ENCODE measurements at regions of chr17 and their contacts with region 1.

Region 1: DNA sequence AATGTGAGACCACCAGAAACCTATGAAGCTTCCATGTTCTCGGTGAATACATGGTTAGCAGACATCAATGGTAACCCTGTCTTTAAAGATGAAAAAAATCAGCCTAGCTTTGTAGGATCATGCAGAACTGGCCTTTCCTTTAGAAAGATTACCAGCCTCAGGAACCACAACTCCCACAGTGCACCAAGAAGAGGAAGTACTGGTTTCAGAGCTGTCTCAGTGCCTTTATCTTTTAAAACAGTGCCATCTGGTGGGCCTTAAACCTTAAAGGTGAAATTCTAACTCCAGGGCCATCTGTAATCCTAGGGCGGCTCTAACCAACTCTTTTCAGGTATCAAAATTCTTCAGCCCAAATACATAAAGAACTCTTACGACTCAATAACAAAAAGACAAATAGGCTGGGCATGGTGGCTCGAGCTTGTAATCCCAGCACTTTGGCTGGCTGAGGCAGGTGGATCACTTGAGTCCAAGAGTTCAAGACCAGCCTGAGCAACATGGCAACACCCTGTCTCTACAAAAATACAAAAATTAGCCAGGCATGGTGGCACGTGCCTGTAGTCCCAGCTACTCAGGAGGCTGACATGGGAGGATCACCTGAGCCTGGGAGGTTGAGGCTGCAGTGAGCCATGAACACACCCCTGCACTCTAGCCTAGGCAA is 5.4 kb downstream of the ATPAF2 start:
- DNase-seq: peak; percentile 83
- ATAC-seq: peak; percentile 93
- H3K4me3 ChIP-seq: no peak overlapping the region
- H3K27ac ChIP-seq: no peak overlapping the region
- H3K4me1 ChIP-seq: peaks cover 34% of the 10 kb centered on the region
- H3K27me3 ChIP-seq: no peaks in the 10 kb centered on the region; a peak in 1 of 5 replicates
- CTCF ChIP-seq: peak; percentile 90
- EP300 ChIP-seq: no peak
- POLR2A ChIP-seq: no peak
- RAD21 ChIP-seq: peak; percentile 71

Region 2: DNA sequence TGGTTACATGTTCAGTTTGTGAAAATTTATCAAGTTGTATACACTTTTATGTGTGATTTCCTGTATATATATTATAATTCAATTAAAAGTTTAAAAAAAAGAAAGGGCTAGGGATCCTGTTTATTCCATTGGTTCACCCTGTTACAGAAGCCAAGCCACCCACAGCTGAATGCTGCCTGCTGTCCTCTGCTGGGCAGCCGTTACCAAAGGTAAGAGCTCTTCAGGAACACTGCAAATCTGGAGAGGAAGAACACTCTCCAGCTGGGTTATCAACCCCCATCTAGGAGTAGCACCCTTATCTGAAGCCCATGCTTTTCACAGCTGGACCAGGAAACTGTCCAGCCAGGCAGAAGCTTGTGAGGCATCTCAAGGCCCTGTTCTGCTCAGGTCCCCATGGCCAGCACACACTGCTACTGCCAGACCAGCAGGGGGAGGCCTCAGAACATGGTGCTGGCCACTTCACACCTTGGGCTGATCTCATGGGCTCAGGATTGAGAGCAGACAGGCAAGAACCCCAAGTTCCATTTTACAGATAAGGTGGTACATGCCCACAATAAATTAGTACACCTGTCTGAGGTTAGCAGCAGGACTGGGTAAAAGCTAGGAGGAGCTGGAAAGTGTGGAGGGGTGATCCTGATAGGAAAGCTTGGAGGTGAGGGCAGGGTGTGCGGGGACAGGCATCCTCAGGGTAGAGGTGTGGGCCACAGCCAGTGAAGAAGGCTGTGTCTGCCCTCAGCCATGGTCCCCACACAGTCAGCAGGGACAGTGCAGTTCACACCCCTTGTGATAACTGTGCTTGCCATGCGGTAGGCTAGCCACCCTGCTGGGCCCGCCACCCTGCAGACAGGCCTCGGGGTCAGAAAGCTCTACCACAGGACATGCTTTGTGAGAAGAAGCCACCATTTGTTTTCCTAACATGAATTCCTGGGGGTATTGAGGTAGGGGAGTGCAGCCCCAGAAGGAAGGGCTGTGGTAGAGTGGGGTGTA is 142.5 kb before region 1 on chr17:
- CTCF ChIA-PET with region 1: interaction called, 13 read pairs
- POLR2A ChIA-PET with region 1: no interaction called
- in situ Hi-C with region 1: loop called (anchors 10 kb)
- intact Hi-C with region 1: loop called (anchors 5 kb)
- DNase-seq: peak; percentile 70
- ATAC-seq: peak; percentile 98
- H3K4me3 ChIP-seq: no peak overlapping the region
- H3K27ac ChIP-seq: no peak overlapping the region
- H3K4me1 ChIP-seq: peaks cover 2% of the 10 kb centered on the region
- H3K27me3 ChIP-seq: no peaks in the 10 kb centered on the region
- CTCF ChIP-seq: peak; percentile 97
- EP300 ChIP-seq: no peak
- POLR2A ChIP-seq: no peak
- RAD21 ChIP-seq: peak; percentile 94

Region 3: GRCh38 chr17:17994271-17995069 is 39.1 kb before region 1 on chr17:
- CTCF ChIA-PET with region 1: interaction called, 14 read pairs
- POLR2A ChIA-PET with region 1: no interaction called
- in situ Hi-C with region 1: loop called (anchors 5 kb)
- intact Hi-C with region 1: loop called (anchors 1 kb)
- DNase-seq: peak; percentile 56
- ATAC-seq: peak; percentile 89
- H3K4me3 ChIP-seq: peak overlapping the region in 1 of 3 experiments; percentile 18; a peak in 1 of 6 replicates
- H3K27ac ChIP-seq: no peak overlapping the region
- H3K4me1 ChIP-seq: peaks cover 29% of the 10 kb centered on the region
- H3K27me3 ChIP-seq: peaks cover 0 to 22% of the 10 kb centered on the region in 2 experiments; a peak in 3 of 5 replicates
- CTCF ChIP-seq: peak; percentile 81
- EP300 ChIP-seq: no peak
- POLR2A ChIP-seq: no peak
- RAD21 ChIP-seq: peak; percentile 66

Region 4: GRCh38 chr17:18076936-18077335 is 43.4 kb after region 1 on chr17:
- CTCF ChIA-PET with region 1: no interaction called
- POLR2A ChIA-PET with region 1: no interaction called
- in situ Hi-C with region 1: no loop called
- intact Hi-C with region 1: no loop called
- DNase-seq: no peak
- ATAC-seq: 0 out of 3 replicates have a peak, but pooled peaks have one; percentile 32
- H3K4me3 ChIP-seq: no peak overlapping the region
- H3K27ac ChIP-seq: no peak overlapping the region
- H3K4me1 ChIP-seq: peaks cover 38% of the 10 kb centered on the region
- H3K27me3 ChIP-seq: no peaks in the 10 kb centered on the region
- CTCF ChIP-seq: no peak
- EP300 ChIP-seq: no peak
- POLR2A ChIP-seq: no peak
- RAD21 ChIP-seq: no peak